Right ventricle myocardium inferior (tissue), 1 donor: ENCODE measurements at regions of chr14 and their contacts with region 1.

Region 1: DNA sequence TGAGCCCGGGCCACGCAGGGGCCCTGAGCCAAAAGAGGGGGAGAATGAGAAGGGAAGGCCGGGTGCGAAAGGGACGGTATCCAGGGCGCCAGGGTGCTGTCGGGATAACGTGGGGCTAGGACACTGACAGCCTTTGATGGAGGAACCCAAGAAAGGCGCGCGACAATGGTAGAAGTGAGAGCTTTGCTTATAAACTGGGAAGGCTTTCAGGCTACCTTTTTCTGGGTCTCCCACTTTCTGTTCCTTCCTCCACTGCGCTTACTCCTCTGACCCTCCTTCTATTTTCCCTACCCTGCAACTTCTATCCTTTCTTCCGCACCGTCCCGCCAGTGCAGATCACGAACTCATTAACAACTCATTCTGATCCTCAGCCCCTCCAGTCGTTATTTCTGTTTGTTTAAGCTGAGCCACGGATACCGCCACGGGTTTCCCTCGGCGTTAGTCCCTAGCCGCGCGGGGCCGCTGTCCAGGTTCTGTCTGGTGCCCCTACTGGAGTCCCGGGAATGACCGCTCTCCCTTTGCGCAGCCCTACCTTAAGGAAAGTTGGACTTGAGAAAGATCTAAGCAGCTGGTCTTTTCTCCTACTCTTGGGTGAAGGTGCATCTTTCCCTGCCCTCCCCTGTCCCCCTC is 3.0 kb downstream of the SSTR1 start:
- DNase-seq: peak; percentile 65
- ATAC-seq: peak; percentile 35

Region 2: GRCh38 chr14:38248321-38249050 is 37.8 kb after region 1 on chr14:
- intact Hi-C with region 1: loop called (anchors 5 kb)
- DNase-seq: no peak
- ATAC-seq: no peak